ENCODE measurements at regions of chr20 and their contacts with region 1.

Region 1: DNA sequence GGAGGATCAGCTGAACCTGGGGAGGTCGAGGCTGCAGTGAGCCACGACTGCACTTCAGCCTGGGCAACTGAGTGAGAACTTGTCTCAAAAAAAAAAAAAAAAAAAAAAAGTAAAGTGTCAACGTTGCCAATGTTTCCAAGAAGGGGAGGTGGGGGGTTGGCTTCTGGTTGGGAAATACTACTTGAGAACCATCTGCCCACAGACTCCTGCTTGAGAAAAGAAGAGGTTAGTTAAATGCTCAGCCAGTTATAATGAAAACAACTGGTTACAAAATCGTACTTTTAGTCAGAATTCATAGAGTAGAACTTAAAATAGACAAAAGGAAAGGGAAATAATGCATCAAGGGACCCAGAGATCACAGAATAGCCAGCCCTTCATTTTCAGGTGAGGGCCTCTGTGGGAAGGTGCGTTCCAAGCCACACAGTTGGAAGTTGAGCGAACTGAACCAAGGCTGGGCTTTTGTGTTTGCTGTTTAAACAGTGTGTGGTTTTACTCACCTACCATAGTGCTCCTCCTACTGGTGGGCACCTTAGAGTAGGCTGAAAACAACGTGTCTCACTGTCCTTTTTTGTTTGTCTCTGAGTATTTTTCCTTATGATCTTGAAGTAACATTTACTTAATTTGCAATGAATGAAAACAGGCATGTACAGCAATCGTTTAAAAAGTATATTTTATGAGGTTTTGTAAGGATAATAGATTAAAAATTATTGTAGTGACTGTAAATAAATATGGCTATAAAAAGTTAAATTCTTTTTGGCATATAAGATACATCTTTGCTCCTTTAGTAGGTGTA is 200.7 kb downstream of the BCAS1 start:
- DNase-seq: peak; percentile 86
- ATAC-seq: peak; percentile 76
- H3K4me3 Mint-ChIP-seq: peak overlapping the region; percentile 18
- H3K27ac Mint-ChIP-seq: peak overlapping the region; percentile 90
- H3K4me1 Mint-ChIP-seq: peaks cover 74% of the 10 kb centered on the region
- H3K27me3 Mint-ChIP-seq: no peaks in the 10 kb centered on the region

Region 2: GRCh38 chr20:53857723-53858236 is 11.9 kb before region 1 on chr20:
- CTCF ChIA-PET with region 1: interaction called, 15 read pairs
- DNase-seq: no peak
- ATAC-seq: no peak
- H3K4me3 Mint-ChIP-seq: no peak overlapping the region
- H3K27ac Mint-ChIP-seq: no peak overlapping the region
- H3K4me1 Mint-ChIP-seq: peaks cover 26% of the 10 kb centered on the region
- H3K27me3 Mint-ChIP-seq: no peaks in the 10 kb centered on the region

Region 3: GRCh38 chr20:53891306-53891944 is 21.8 kb after region 1 on chr20:
- CTCF ChIA-PET with region 1: interaction called, 10 read pairs
- DNase-seq: no peak
- ATAC-seq: no peak
- H3K4me3 Mint-ChIP-seq: no peak overlapping the region
- H3K27ac Mint-ChIP-seq: peak overlapping the region; percentile 39
- H3K4me1 Mint-ChIP-seq: peaks cover 52% of the 10 kb centered on the region
- H3K27me3 Mint-ChIP-seq: no peaks in the 10 kb centered on the region